ENCODE measurements at regions of chr11 and their contacts with region 1.

Region 1: GRCh38 chr11:44286268-44286880 is 23.6 kb downstream of the ALX4 start:
- DNase-seq: peak; percentile 41
- H3K4me3 ChIP-seq: no peak overlapping the region
- H3K27ac ChIP-seq: no peak overlapping the region
- H3K4me1 ChIP-seq: no peaks in the 10 kb centered on the region
- H3K27me3 ChIP-seq: no peaks in the 10 kb centered on the region
- CTCF ChIP-seq: peak; percentile 93 to 95
- POLR2A ChIP-seq: no peak

Region 2: GRCh38 chr11:44133335-44133946 is 152.9 kb before region 1 on chr11:
- CTCF ChIA-PET with region 1: interaction called, 31 read pairs
- POLR2A ChIA-PET with region 1: no interaction called
- dilution Hi-C with region 1: no loop called
- intact Hi-C with region 1: loop called (anchors 1 kb)
- DNase-seq: peak; percentile 64
- H3K4me3 ChIP-seq: no peak overlapping the region
- H3K27ac ChIP-seq: no peak overlapping the region
- H3K4me1 ChIP-seq: no peaks in the 10 kb centered on the region
- H3K27me3 ChIP-seq: no peaks in the 10 kb centered on the region
- CTCF ChIP-seq: peak; percentile 60 to 71
- POLR2A ChIP-seq: no peak

Region 3: GRCh38 chr11:44243595-44244343 is 42.6 kb before region 1 on chr11:
- CTCF ChIA-PET with region 1: interaction called, 11 read pairs
- POLR2A ChIA-PET with region 1: no interaction called
- dilution Hi-C with region 1: no loop called
- intact Hi-C with region 1: no loop called
- DNase-seq: peak; percentile 7
- H3K4me3 ChIP-seq: no peak overlapping the region
- H3K27ac ChIP-seq: peak overlapping the region; percentile 9
- H3K4me1 ChIP-seq: peaks cover 22% of the 10 kb centered on the region
- H3K27me3 ChIP-seq: no peaks in the 10 kb centered on the region
- CTCF ChIP-seq: no peak
- POLR2A ChIP-seq: no peak

Region 4: GRCh38 chr11:44298862-44299261 is 12.5 kb after region 1 on chr11:
- CTCF ChIA-PET with region 1: interaction called, 12 read pairs
- POLR2A ChIA-PET with region 1: no interaction called
- dilution Hi-C with region 1: no loop called
- intact Hi-C with region 1: loop called (anchors 2 kb)
- DNase-seq: no peak
- H3K4me3 ChIP-seq: no peak overlapping the region
- H3K27ac ChIP-seq: no peak overlapping the region
- H3K4me1 ChIP-seq: no peaks in the 10 kb centered on the region
- H3K27me3 ChIP-seq: peaks cover 24 to 37% of the 10 kb centered on the region in 2 experiments
- CTCF ChIP-seq: no peak
- POLR2A ChIP-seq: no peak

Region 5: DNA sequence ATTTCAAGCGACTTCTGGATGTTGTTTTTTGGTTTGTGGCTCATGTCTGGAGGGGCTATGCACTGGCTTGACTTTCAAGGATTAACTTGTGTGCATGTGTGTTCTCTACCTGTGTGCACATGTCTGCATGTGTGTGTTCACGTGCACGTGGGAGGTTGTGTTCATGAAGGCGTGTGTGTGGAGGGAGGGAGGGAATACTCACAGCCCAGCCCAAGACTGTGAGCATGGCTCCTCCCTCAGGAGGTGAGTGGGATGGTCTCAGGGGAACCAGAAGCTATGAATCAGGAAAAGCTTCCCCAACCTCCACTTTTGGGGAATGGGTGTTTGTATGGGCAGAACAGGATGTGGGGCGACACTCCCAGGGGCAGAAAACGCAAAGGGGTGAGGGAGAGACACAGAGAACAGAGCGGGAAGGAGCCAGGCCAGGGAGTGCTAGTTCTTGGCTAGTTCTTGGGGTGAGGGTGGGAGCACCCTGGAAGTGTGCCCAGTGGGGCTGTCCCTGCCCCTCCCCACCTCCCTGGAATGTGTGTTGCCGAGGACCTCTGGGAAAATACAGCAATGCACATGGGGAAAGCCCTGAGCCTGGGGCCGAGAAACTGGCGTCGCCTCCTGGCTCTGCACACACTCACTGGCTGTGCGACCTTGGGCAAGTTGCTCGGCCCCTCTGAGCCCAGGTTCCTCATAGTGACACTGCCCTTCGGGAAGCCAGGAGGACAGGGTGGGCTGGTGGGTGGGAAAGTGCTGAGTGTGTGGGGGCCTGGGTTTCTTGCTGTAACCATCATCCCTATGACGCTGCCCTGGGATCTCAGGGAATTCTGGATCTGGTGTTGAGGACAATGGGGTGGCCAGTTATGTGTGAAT is 40.5 kb after region 1 on chr11:
- CTCF ChIA-PET with region 1: interaction called, 10 read pairs
- POLR2A ChIA-PET with region 1: no interaction called
- dilution Hi-C with region 1: no loop called
- intact Hi-C with region 1: no loop called
- DNase-seq: no peak
- H3K4me3 ChIP-seq: no peak overlapping the region
- H3K27ac ChIP-seq: no peak overlapping the region
- H3K4me1 ChIP-seq: no peaks in the 10 kb centered on the region
- H3K27me3 ChIP-seq: peaks cover 55 to 70% of the 10 kb centered on the region in 2 experiments
- CTCF ChIP-seq: no peak
- POLR2A ChIP-seq: no peak

Region 6: GRCh38 chr11:44538375-44539054 is 252.1 kb after region 1 on chr11:
- CTCF ChIA-PET with region 1: interaction called, 12 read pairs
- POLR2A ChIA-PET with region 1: no interaction called
- dilution Hi-C with region 1: no loop called
- intact Hi-C with region 1: loop called (anchors 1 kb)
- DNase-seq: peak; percentile 72
- H3K4me3 ChIP-seq: no peak overlapping the region
- H3K27ac ChIP-seq: no peak overlapping the region
- H3K4me1 ChIP-seq: no peaks in the 10 kb centered on the region
- H3K27me3 ChIP-seq: peaks cover 4 to 5% of the 10 kb centered on the region in 2 experiments
- CTCF ChIP-seq: peak; percentile 91 to 95
- POLR2A ChIP-seq: no peak

Measured in endothelial cell of umbilical vein (primary cell).